Colonic mucosa (tissue), 4 donors: ENCODE measurements at regions of chr2 and their contacts with region 1.

Region 1: GRCh38 chr2:43024515-43025011 is 201.8 kb downstream of the ZFP36L2 start:
- DNase-seq: peak; percentile 83
- H3K4me3 ChIP-seq: no peak overlapping the region
- H3K27ac ChIP-seq: no peak overlapping the region
- H3K4me1 ChIP-seq: no peaks in the 10 kb centered on the region
- H3K27me3 ChIP-seq: no peaks in the 10 kb centered on the region
- CTCF ChIP-seq: peak; percentile 82

Region 2: DNA sequence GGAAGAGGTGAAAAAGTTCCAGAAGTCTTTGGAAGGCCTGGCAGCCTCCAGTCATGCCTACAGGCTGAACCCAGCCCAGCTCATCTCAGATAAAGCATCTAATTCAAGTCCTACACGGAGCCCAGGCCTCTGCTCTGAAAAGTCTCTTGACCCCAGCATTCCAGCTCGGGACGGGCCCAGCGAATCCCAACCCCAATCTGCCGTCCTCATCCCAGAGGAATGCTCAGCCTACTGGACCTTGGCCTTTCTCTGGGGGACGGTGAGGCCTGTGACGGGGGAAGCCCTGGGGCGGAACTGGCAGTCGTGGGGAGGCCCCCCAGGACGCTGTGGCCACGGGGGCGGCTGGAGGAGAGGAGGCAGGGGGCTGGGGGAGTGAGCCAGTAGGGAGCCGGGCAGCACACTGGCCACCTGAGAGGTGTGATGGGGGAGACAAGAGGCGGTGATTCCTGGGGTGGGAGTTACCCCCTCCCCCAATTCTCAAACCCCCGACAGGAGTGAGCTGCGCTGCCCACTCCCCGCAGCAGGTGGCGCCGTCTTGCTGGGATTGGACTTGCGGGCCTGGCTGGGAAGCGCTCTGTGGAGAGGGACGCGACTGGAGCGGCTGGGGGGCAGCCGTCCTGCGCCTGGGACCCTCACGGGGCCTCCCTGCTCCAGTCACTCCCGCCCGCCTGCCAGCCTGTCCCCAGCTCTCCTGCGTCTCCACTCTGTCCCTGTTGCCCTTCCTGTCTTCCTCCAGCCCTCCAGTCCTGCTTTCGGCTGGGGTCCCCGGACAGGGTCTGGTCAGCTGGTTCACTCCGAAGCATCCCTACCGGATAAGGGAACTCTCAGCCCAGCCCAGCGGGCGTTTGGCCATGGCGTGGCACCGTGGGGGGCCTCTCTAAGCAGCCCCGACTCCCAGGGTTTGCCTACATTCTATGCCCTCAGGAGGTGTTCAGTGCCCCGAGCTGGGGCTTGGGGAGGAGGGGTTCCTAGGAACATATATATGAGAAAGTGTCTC is 49.5 kb before region 1 on chr2:
- intact Hi-C with region 1: loop called (anchors 5 kb)
- DNase-seq: peak; percentile 86
- H3K4me3 ChIP-seq: peak overlapping the region; percentile 19
- H3K27ac ChIP-seq: peak overlapping the region; percentile 30
- H3K4me1 ChIP-seq: peaks cover 6% of the 10 kb centered on the region
- H3K27me3 ChIP-seq: no peaks in the 10 kb centered on the region
- CTCF ChIP-seq: peak; percentile 86